PC-3 (cell line): ENCODE measurements at regions of chrX and their contacts with region 1.

Region 1: GRCh38 chrX:81414630-81415029 is 212.7 kb downstream of the SH3BGRL start:
- DNase-seq: peak; percentile 38
- ATAC-seq: no peak
- H3K4me3 ChIP-seq: no peak overlapping the region
- H3K27ac ChIP-seq: no peak overlapping the region
- H3K4me1 ChIP-seq: no peaks in the 10 kb centered on the region
- H3K27me3 ChIP-seq: no peaks in the 10 kb centered on the region
- CTCF ChIP-seq: peak; percentile 50

Region 2: DNA sequence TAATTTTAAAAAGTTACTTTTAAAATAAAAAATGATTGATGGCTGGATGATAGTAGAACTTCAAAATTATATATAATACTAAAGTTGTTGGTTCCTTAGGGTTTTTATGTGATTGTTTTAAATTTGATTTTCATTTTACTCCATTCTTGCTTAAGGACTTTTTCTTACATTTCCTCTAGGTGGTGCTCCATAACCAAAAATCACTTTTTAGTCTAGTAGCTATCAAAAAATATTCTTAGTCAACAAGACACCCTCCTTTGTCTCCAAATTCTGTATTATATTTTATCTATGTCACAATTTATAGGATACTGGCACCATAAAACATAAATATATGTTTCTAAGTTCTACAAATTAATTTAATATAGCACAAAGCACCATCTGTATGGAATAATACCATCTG is 537.8 kb before region 1 on chrX:
- CTCF ChIA-PET with region 1: no interaction called
- POLR2A ChIA-PET with region 1: no interaction called
- intact Hi-C with region 1: loop called (anchors 2 kb)
- DNase-seq: peak; percentile 56
- ATAC-seq: no peak
- H3K4me3 ChIP-seq: no peak overlapping the region
- H3K27ac ChIP-seq: no peak overlapping the region
- H3K4me1 ChIP-seq: peaks cover 12% of the 10 kb centered on the region
- H3K27me3 ChIP-seq: no peaks in the 10 kb centered on the region
- CTCF ChIP-seq: peak; percentile 59

Region 3: GRCh38 chrX:81174286-81174685 is 240.3 kb before region 1 on chrX:
- CTCF ChIA-PET with region 1: no interaction called
- POLR2A ChIA-PET with region 1: no interaction called
- intact Hi-C with region 1: loop called (anchors 2 kb)
- DNase-seq: peak; percentile 71
- ATAC-seq: peak; percentile 79
- H3K4me3 ChIP-seq: no peak overlapping the region
- H3K27ac ChIP-seq: no peak overlapping the region
- H3K4me1 ChIP-seq: no peaks in the 10 kb centered on the region
- H3K27me3 ChIP-seq: no peaks in the 10 kb centered on the region
- CTCF ChIP-seq: peak; percentile 59

Region 4: GRCh38 chrX:81286646-81287045 is 128.0 kb before region 1 on chrX:
- CTCF ChIA-PET with region 1: no interaction called
- POLR2A ChIA-PET with region 1: no interaction called
- intact Hi-C with region 1: no loop called
- DNase-seq: peak; percentile 67
- ATAC-seq: peak; percentile 77
- H3K4me3 ChIP-seq: peak overlapping the region; percentile 62
- H3K27ac ChIP-seq: peak overlapping the region; percentile 100
- H3K4me1 ChIP-seq: peaks cover 21% of the 10 kb centered on the region
- H3K27me3 ChIP-seq: no peaks in the 10 kb centered on the region
- CTCF ChIP-seq: no peak